GM13977 (cell line): ENCODE measurements at regions of chr11 and their contacts with region 1.

Region 1: GRCh38 chr11:122853971-122854446 is 15.7 kb downstream of the CRTAM start:
- DNase-seq: peak; percentile 43
- CTCF ChIP-seq: peak; percentile 69

Region 2: DNA sequence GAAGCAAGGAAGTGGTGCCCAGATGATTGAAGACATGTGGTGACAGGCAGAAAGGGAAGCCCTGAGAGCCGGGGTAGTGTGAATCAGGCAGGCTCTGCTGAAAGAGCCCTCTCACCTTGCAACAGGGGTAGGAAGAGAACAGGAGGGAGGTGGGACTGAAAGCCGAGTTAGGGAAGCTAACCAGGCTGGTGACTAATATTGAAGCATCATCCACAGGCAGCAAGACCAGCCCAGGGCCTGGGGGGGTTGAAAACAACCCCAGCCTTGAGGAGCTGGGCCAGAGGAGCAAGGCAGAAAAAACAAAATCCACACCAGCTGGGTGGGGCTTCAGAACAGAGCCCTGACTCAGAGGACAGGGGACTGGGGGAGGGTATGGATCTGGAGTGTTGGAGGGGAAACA is 50.7 kb before region 1 on chr11:
- in situ Hi-C with region 1: loop called (anchors 5 kb)
- DNase-seq: no peak
- CTCF ChIP-seq: no peak

Region 3: GRCh38 chr11:123525511-123525918 is 671.5 kb after region 1 on chr11:
- in situ Hi-C with region 1: no loop called
- DNase-seq: no peak
- CTCF ChIP-seq: no peak